Activated T-helper 2 cell treated with anti-CD3 and anti-CD28 coated beads, Interferon-gamma antibody, Interleukin-2, Interleukin-4, amounts not matched to agents 10 μg/mL and 5 μg/mL and 100 μg/mL, durations not matched to agents 14 hours and 24 hours and 36 hours (primary cell): ENCODE measurements at regions of chr10 and their contacts with region 1.

Region 1: GRCh38 chr10:61987951-61988379 is 86.5 kb downstream of the ARID5B start:
- DNase-seq: peak; percentile 36
- H3K4me3 Mint-ChIP-seq: peak overlapping the region; percentile 46
- H3K27ac Mint-ChIP-seq: peak overlapping the region; percentile 90
- H3K4me1 Mint-ChIP-seq: peaks cover 67% of the 10 kb centered on the region
- H3K27me3 Mint-ChIP-seq: no peaks in the 10 kb centered on the region

Region 2: DNA sequence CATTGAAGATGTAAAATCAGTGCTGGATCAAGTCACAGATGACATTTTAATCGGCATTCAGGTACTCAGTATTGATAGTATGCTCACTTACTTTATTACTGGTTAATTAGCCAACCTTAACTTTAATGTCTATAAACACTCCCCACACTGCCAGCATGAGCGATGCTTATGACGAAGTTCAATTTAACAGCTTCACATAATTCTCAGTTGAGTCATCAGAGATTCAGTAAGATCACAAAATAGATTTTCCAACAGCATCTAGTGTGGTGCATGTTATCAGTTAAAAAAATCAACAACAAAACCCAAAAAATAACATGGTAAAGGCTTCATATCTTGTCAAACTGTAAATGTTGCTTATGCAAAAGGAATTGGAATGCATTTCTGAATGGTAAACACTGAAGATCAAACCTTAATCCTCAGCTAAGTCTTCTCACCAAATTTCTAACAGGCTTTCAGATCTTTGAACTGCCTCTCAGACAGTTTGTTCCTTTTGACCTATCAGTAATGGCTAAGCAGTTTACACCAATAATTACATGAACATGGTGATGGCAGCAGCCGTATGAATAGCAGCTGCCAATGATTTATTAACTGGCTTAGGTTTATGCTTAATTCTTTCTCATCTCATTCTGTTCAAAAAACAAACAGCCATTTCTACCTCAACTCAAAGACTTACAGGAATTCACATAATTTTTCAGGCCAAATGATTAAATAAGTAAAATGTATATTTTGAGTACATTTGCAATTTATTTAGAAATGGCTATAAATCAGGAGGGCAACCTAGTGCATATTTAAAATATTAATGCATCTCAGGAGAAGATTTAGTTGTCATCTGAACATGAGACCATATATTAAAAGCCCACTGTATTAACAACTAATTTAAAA is 226.8 kb before region 1 on chr10:
- intact Hi-C with region 1: loop called (anchors 1 kb)
- DNase-seq: no peak
- H3K4me3 Mint-ChIP-seq: peak overlapping the region; percentile 30
- H3K27ac Mint-ChIP-seq: peak overlapping the region; percentile 87
- H3K4me1 Mint-ChIP-seq: peaks cover 65% of the 10 kb centered on the region
- H3K27me3 Mint-ChIP-seq: no peaks in the 10 kb centered on the region

Region 3: GRCh38 chr10:61896854-61897661 is 90.9 kb before region 1 on chr10:
- intact Hi-C with region 1: loop called (anchors 1 kb)
- DNase-seq: peak; percentile 56
- H3K4me3 Mint-ChIP-seq: peak overlapping the region; percentile 73
- H3K27ac Mint-ChIP-seq: peak overlapping the region; percentile 83
- H3K4me1 Mint-ChIP-seq: peaks cover 42% of the 10 kb centered on the region
- H3K27me3 Mint-ChIP-seq: no peaks in the 10 kb centered on the region

Region 4: DNA sequence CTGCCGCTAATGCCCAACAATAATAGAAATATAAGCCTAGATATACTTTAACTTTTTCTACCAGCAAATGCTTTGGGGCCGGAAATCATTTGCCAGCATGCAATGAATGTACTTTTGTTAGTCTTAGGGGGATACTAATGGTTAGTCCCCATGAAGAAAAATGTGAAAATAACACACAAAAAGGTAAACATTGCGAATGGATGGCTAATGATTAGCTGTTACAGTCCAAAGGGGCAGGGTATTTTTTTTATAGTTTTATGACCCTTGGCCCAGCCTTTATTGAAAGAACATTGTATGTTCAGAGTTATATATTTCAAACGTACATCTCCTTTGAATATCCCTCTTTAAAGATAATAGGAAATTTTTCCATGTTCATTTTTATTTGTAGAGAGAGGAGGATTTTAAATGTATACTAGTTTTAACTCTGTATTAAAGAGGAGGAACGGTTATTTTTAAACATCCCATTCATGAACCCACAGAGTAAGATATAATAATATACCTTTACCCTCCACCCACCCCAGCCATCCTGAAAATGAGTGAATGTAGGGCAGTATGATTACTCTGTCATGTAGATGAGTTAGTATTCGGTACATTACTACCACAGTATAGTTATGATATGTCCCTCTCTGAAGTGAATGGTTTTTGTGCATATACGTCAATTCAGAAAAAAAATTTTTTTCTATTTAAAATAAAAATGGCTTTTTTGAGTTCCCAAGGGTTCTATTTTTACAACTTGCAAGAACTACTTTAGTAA is 22.8 kb before region 1 on chr10:
- intact Hi-C with region 1: loop called (anchors 1 kb)
- DNase-seq: no peak
- H3K4me3 Mint-ChIP-seq: no peak overlapping the region
- H3K27ac Mint-ChIP-seq: peak overlapping the region; percentile 76
- H3K4me1 Mint-ChIP-seq: peaks cover 76% of the 10 kb centered on the region
- H3K27me3 Mint-ChIP-seq: no peaks in the 10 kb centered on the region

Region 5: GRCh38 chr10:62019685-62020315 is 31.8 kb after region 1 on chr10:
- intact Hi-C with region 1: loop called (anchors 5 kb)
- DNase-seq: no peak
- H3K4me3 Mint-ChIP-seq: no peak overlapping the region
- H3K27ac Mint-ChIP-seq: no peak overlapping the region
- H3K4me1 Mint-ChIP-seq: peaks cover 42% of the 10 kb centered on the region
- H3K27me3 Mint-ChIP-seq: no peaks in the 10 kb centered on the region

Region 6: DNA sequence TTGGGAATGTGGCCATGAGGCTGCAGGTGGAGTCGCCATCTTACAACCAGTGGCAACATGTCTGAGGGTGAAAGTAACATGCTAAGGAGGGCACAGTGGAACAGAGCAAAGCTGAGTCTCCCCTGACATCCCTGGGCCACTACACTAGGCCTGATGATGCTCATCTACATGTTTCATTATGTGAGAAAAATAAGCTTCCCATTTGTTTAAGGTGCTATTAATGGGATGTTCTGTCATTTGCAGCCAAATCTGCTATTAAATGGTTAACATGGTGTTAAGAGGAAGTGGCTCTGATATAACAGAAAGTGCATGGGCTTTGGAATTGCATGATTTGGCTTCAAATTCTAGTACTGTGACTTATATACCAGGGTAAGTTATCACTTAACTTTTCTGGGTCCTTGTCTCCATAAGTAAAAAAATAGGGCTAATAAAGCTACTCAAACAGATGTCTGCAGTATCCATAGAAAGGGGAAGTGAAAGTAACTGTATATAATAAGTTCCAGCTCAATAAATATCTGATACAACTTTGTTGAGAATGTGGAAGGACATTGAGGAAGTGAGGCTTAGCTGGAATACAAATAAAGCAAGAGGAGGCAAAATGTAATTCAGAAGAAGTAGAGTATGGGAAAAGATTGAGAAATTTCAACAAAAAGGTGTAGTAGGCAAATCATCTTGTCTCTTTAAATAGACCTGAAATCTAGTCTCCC is 121.8 kb after region 1 on chr10:
- intact Hi-C with region 1: no loop called
- DNase-seq: no peak
- H3K4me3 Mint-ChIP-seq: no peak overlapping the region
- H3K27ac Mint-ChIP-seq: no peak overlapping the region
- H3K4me1 Mint-ChIP-seq: peaks cover 46% of the 10 kb centered on the region
- H3K27me3 Mint-ChIP-seq: no peaks in the 10 kb centered on the region